ENCODE measurements at regions of chr11 and their contacts with region 1.

Region 1: GRCh38 chr11:108647701-108648527 is 17.0 kb upstream of the DDX10 start:
- DNase-seq: peak; percentile 88
- ATAC-seq: peak; percentile 94
- H3K4me3 ChIP-seq: no peak overlapping the region
- H3K27ac ChIP-seq: peak overlapping the region; percentile 46
- H3K4me1 ChIP-seq: peaks cover 12% of the 10 kb centered on the region
- H3K27me3 ChIP-seq: no peaks in the 10 kb centered on the region
- CTCF ChIP-seq: peak; percentile 97

Region 2: GRCh38 chr11:108414958-108415357 is 233.0 kb before region 1 on chr11:
- CTCF ChIA-PET with region 1: no interaction called
- POLR2A ChIA-PET with region 1: no interaction called
- intact Hi-C with region 1: loop called (anchors 1 kb)
- DNase-seq: no peak
- ATAC-seq: no peak
- H3K4me3 ChIP-seq: no peak overlapping the region
- H3K27ac ChIP-seq: no peak overlapping the region
- H3K4me1 ChIP-seq: no peaks in the 10 kb centered on the region
- H3K27me3 ChIP-seq: no peaks in the 10 kb centered on the region
- CTCF ChIP-seq: no peak

Region 3: GRCh38 chr11:108588287-108588686 is 59.6 kb before region 1 on chr11:
- CTCF ChIA-PET with region 1: no interaction called
- POLR2A ChIA-PET with region 1: no interaction called
- intact Hi-C with region 1: loop called (anchors 1 kb)
- DNase-seq: peak; percentile 31
- ATAC-seq: no peak
- H3K4me3 ChIP-seq: no peak overlapping the region
- H3K27ac ChIP-seq: no peak overlapping the region
- H3K4me1 ChIP-seq: peaks cover 39% of the 10 kb centered on the region
- H3K27me3 ChIP-seq: no peaks in the 10 kb centered on the region
- CTCF ChIP-seq: peak; percentile 60

Region 4: GRCh38 chr11:108609681-108610080 is 38.2 kb before region 1 on chr11:
- CTCF ChIA-PET with region 1: interaction called, 4 read pairs
- POLR2A ChIA-PET with region 1: interaction called, 3 read pairs
- intact Hi-C with region 1: loop called (anchors 5 kb)
- DNase-seq: peak; percentile 66
- ATAC-seq: no peak
- H3K4me3 ChIP-seq: no peak overlapping the region
- H3K27ac ChIP-seq: no peak overlapping the region
- H3K4me1 ChIP-seq: peaks cover 33% of the 10 kb centered on the region
- H3K27me3 ChIP-seq: no peaks in the 10 kb centered on the region
- CTCF ChIP-seq: no peak

Measured in PC-3 (cell line).